OCI-LY7 (cell line): ENCODE measurements at regions of chr4 and their contacts with region 1.

Region 1: DNA sequence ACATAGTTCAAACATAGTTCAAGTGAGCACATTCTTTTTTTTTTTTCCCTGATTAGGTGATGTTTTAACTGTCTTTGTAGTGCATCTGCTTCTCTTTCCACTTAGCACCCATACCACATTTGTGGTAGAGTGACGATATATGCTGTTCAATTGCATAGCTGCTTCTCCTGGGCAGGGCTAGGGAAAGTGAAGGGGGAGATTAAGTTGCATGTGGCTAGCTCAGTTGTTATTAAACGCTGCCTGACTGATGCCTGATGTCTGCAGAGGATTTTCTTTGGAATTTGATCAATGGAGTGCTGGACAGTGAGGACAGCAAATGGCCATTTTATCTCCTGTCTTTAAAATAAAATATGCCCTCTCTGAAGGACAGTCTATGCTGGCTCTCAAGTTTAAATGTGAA is 63.7 kb downstream of the ANK2 start:
- DNase-seq: no peak
- H3K4me3 ChIP-seq: no peak overlapping the region
- H3K27ac ChIP-seq: no peak overlapping the region
- H3K4me1 ChIP-seq: no peaks in the 10 kb centered on the region
- CTCF ChIP-seq: no peak

Region 2: GRCh38 chr4:113971706-113972360 is 858.7 kb after region 1 on chr4:
- CTCF ChIA-PET with region 1: no interaction called
- POLR2A ChIA-PET with region 1: interaction called, 14 read pairs
- intact Hi-C with region 1: no loop called
- DNase-seq: no peak
- H3K4me3 ChIP-seq: no peak overlapping the region
- H3K27ac ChIP-seq: no peak overlapping the region
- H3K4me1 ChIP-seq: no peaks in the 10 kb centered on the region
- CTCF ChIP-seq: no peak